Activated T-helper 1 cell treated with anti-CD3 and anti-CD28 coated beads, Interleukin-12 subunit alpha, Interleukin-12 subunit beta, Interleukin-2, Interleukin-4 antibody, amounts not matched to agents 30 ng/mL and 10 ng/mL and 1 ng/mL, durations not matched to agents 14 hours and 24 hours and 36 hours (primary cell): ENCODE measurements at regions of chr6 and their contacts with region 1.

Region 1: GRCh38 chr6:33014841-33015634 is 5.6 kb upstream of the HLA-DOA start:
- DNase-seq: peak; percentile 58
- H3K4me3 Mint-ChIP-seq: no peak overlapping the region
- H3K27ac Mint-ChIP-seq: no peak overlapping the region
- H3K4me1 Mint-ChIP-seq: peaks cover 31% of the 10 kb centered on the region
- H3K27me3 Mint-ChIP-seq: peaks cover 8% of the 10 kb centered on the region

Region 2: DNA sequence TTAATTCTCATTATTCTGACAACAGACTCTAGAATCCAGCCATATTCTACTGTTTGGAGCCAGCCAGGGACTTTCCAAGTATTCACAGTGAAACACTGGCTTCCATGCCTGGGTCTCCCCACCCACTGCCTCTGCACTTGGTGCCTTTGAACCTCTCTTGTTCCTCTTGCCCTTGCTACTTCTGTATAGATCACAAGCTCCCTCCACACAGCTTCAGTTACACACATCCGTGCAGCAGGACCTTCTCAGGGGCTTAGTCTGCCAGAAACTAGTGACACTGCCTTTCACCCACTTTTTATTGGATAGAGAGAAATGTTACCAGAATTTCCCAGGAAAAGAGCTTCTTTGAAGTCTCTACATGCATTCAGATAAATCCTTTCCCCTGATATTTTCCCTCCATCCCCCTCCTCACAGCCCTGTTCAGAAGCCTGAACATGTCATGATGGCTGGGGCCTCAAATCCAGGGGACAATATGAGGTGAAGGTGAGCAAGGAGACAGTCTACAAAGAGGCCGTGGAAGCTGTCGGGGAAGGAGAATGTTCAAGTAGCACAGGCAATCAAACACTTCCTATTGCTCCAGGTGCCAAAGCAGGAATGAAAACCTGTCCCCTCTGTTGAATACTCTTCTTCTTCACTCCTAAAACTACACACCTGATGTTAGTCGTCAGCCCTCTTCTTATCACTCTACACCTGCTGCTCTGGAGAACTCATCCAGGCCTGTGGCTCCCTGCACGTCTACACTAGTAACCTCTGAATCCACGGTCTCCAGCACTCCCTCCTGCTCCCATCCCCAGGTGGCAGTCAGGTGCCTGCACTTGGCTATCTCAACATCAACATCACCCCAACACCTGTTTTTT is 14.5 kb after region 1 on chr6:
- intact Hi-C with region 1: loop called (anchors 1 kb)
- DNase-seq: peak; percentile 16
- H3K4me3 Mint-ChIP-seq: peak overlapping the region; percentile 19
- H3K27ac Mint-ChIP-seq: peak overlapping the region; percentile 63
- H3K4me1 Mint-ChIP-seq: peaks cover 23% of the 10 kb centered on the region
- H3K27me3 Mint-ChIP-seq: peaks cover 28% of the 10 kb centered on the region

Region 3: GRCh38 chr6:33075568-33076405 is 60.7 kb after region 1 on chr6 and contains the start of gene HLA-DPB1:
- intact Hi-C with region 1: loop called (anchors 2 kb)
- DNase-seq: peak; percentile 40
- H3K4me3 Mint-ChIP-seq: peak within 1 kb of the TSS; percentile 78
- H3K27ac Mint-ChIP-seq: peak within 1 kb of the TSS; percentile 47
- H3K4me1 Mint-ChIP-seq: peaks cover 60% of the 10 kb centered on the region
- H3K27me3 Mint-ChIP-seq: peaks cover 4% of the 10 kb centered on the region
- total RNA-seq, gene HLA-DPB1: 12.2 and 12.3 TPM in 2 replicates

Region 4: DNA sequence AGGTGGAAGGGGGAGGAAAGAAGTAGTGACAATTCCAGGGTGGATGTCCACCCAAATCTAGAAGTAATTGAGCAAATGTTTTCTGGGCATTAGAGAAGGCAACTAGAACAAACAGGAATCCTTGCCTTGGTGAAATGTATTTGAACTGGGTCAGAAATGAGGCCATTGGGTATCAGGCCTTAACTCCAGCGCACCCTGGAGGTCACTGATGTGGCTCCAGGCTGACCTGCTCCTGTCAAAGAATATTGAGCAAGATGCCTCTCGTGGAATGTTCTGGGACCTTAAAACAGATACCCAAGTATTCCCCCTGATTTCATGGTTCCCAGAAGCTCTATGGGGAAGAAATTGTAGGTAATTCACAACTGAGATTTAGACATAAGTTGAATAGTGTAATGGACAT is 67.7 kb after region 1 on chr6:
- intact Hi-C with region 1: loop called (anchors 1 kb)
- DNase-seq: no peak
- H3K4me3 Mint-ChIP-seq: no peak overlapping the region
- H3K27ac Mint-ChIP-seq: no peak overlapping the region
- H3K4me1 Mint-ChIP-seq: peaks cover 22% of the 10 kb centered on the region
- H3K27me3 Mint-ChIP-seq: peaks cover 2% of the 10 kb centered on the region

Region 5: DNA sequence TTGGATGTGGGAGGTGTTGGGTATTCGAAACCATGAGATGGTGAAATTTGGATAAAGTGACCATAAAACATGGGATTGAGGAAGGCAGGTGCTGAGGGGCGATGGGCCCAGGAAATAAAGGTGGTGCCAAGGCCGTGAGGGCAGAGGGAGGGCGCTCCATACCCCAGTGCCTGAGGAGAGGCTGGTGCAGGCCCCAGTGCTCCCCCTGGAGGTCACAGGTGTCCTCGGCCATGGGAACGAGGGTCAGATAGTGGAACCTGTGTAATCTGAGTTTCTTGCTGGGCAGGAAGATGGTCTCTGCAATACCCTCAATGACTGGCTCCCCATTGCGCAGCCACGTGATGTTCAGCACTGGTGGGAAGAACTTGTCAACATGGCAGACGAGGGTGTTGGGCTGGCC is 76.9 kb after region 1 on chr6:
- intact Hi-C with region 1: loop called (anchors 1 kb)
- DNase-seq: peak; percentile 35
- H3K4me3 Mint-ChIP-seq: no peak overlapping the region
- H3K27ac Mint-ChIP-seq: no peak overlapping the region
- H3K4me1 Mint-ChIP-seq: no peaks in the 10 kb centered on the region
- H3K27me3 Mint-ChIP-seq: peaks cover 16% of the 10 kb centered on the region

Region 6: GRCh38 chr6:33147807-33148666 is 133.0 kb after region 1 on chr6:
- intact Hi-C with region 1: loop called (anchors 1 kb)
- DNase-seq: no peak
- H3K4me3 Mint-ChIP-seq: no peak overlapping the region
- H3K27ac Mint-ChIP-seq: no peak overlapping the region
- H3K4me1 Mint-ChIP-seq: peaks cover 4% of the 10 kb centered on the region
- H3K27me3 Mint-ChIP-seq: peaks cover 13% of the 10 kb centered on the region